A673 (cell line): ENCODE measurements at regions of chr7 and their contacts with region 1.

Region 1: GRCh38 chr7:22718200-22718711 is 8.7 kb upstream of the IL6 start:
- DNase-seq: no peak
- H3K4me3 ChIP-seq: no peak overlapping the region
- H3K27ac ChIP-seq: no peak overlapping the region
- H3K4me1 ChIP-seq: peaks cover 2% of the 10 kb centered on the region
- H3K27me3 ChIP-seq: no peaks in the 10 kb centered on the region
- CTCF ChIP-seq: no peak

Region 2: GRCh38 chr7:22488643-22489462 is 229.4 kb before region 1 on chr7:
- CTCF ChIA-PET with region 1: no interaction called
- POLR2A ChIA-PET with region 1: no interaction called
- intact Hi-C with region 1: no loop called
- DNase-seq: peak; percentile 86
- H3K4me3 ChIP-seq: no peak overlapping the region
- H3K27ac ChIP-seq: no peak overlapping the region
- H3K4me1 ChIP-seq: peaks cover 3% of the 10 kb centered on the region
- H3K27me3 ChIP-seq: no peaks in the 10 kb centered on the region
- CTCF ChIP-seq: peak; percentile 92

Region 3: GRCh38 chr7:22577396-22578001 is 140.8 kb before region 1 on chr7:
- CTCF ChIA-PET with region 1: no interaction called
- POLR2A ChIA-PET with region 1: interaction called, 11 read pairs
- intact Hi-C with region 1: no loop called
- DNase-seq: peak; percentile 66
- H3K4me3 ChIP-seq: no peak overlapping the region
- H3K27ac ChIP-seq: no peak overlapping the region
- H3K4me1 ChIP-seq: peaks cover 10% of the 10 kb centered on the region
- H3K27me3 ChIP-seq: no peaks in the 10 kb centered on the region
- CTCF ChIP-seq: no peak